Breast epithelium (tissue), 4 donors: ENCODE measurements at regions of chr11 and their contacts with region 1.

Region 1: DNA sequence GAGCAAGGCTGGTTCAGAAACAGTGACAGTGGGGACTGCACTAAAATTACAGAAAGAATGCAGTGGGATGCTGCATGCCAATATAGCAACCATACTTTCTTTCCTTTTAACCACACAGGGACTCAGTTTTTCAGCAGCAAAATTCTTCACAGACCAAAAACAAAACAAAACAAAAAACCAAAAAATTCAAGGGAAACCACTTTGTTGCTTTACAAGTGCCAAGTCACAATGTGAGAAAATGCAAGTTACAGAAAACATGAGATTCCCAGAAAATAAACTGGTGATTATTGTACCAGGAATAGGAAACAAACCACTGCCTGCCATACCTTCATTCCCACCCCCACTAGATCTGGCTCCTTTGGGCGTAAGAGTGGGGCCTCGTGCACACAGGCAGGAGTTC is 52.6 kb downstream of the TENM4 start:
- DNase-seq: no peak
- H3K4me3 ChIP-seq: no peak overlapping the region
- H3K27ac ChIP-seq: no peak overlapping the region
- H3K4me1 ChIP-seq: no peaks in the 10 kb centered on the region
- H3K27me3 ChIP-seq: no peaks in the 10 kb centered on the region
- CTCF ChIP-seq: no peak
- POLR2A ChIP-seq: no peak

Region 2: DNA sequence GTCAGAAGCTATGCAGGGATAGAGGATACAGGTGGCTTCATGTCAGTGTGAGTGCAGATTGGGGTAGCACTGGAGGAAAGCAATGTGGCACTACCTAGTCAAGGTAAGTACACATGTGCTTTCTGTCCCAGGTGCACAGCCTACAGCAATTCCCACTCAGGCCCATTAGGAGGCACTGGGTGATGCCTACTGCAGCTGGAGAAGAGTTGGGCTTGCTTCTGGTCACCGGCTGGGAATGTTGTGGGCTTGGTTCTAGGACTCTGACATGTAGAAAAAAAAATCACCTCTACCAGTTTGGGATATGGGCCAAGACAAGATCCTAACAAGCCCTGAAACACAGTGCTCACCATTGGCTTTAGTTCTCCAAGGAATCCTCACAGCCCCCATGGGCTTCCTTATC is 17.0 kb before region 1 on chr11:
- intact Hi-C with region 1: no loop called
- DNase-seq: no peak
- H3K4me3 ChIP-seq: no peak overlapping the region
- H3K27ac ChIP-seq: no peak overlapping the region
- H3K4me1 ChIP-seq: no peaks in the 10 kb centered on the region
- H3K27me3 ChIP-seq: no peaks in the 10 kb centered on the region
- CTCF ChIP-seq: no peak
- POLR2A ChIP-seq: no peak

Region 3: DNA sequence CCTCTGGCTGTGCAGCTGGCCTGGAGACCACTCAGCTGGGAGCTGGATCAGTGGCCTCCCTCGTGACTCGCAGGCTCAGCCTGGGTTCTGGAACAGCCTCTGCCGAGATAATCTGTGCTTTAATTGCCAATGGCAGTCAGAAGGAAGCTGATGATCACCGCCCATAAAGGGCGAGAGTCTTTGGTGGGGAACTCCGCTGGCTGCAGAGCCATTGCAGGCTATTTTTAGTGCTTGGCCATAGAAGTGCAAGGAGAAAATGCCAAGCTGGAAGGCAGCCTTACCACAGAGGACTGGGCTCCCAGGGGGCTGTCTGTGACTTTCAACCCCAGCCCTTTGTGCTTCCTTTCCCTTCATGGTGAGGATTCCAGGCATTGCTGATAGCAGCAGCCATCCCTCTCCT is 114.8 kb after region 1 on chr11:
- intact Hi-C with region 1: no loop called
- DNase-seq: no peak
- H3K4me3 ChIP-seq: no peak overlapping the region
- H3K27ac ChIP-seq: no peak overlapping the region
- H3K4me1 ChIP-seq: no peaks in the 10 kb centered on the region
- H3K27me3 ChIP-seq: peaks cover 0 to 5% of the 10 kb centered on the region in 2 donors
- CTCF ChIP-seq: no peak
- POLR2A ChIP-seq: no peak

Region 4: GRCh38 chr11:80129389-80129788 is 741.2 kb after region 1 on chr11:
- intact Hi-C with region 1: loop called (anchors 5 kb)
- DNase-seq: no peak
- H3K4me3 ChIP-seq: no peak overlapping the region
- H3K27ac ChIP-seq: no peak overlapping the region
- H3K4me1 ChIP-seq: no peaks in the 10 kb centered on the region
- H3K27me3 ChIP-seq: no peaks in the 10 kb centered on the region
- CTCF ChIP-seq: no peak
- POLR2A ChIP-seq: no peak